ENCODE measurements at regions of chr3 and their contacts with region 1.

Region 1: GRCh38 chr3:184314700-184315542 is 515 bp downstream of the EIF4G1 start:
- DNase-seq: peak; percentile 65
- H3K4me3 Mint-ChIP-seq: peak overlapping the region; percentile 90
- H3K27ac Mint-ChIP-seq: peak overlapping the region; percentile 90
- H3K4me1 Mint-ChIP-seq: peaks cover 42% of the 10 kb centered on the region
- H3K27me3 Mint-ChIP-seq: no peaks in the 10 kb centered on the region

Region 2: DNA sequence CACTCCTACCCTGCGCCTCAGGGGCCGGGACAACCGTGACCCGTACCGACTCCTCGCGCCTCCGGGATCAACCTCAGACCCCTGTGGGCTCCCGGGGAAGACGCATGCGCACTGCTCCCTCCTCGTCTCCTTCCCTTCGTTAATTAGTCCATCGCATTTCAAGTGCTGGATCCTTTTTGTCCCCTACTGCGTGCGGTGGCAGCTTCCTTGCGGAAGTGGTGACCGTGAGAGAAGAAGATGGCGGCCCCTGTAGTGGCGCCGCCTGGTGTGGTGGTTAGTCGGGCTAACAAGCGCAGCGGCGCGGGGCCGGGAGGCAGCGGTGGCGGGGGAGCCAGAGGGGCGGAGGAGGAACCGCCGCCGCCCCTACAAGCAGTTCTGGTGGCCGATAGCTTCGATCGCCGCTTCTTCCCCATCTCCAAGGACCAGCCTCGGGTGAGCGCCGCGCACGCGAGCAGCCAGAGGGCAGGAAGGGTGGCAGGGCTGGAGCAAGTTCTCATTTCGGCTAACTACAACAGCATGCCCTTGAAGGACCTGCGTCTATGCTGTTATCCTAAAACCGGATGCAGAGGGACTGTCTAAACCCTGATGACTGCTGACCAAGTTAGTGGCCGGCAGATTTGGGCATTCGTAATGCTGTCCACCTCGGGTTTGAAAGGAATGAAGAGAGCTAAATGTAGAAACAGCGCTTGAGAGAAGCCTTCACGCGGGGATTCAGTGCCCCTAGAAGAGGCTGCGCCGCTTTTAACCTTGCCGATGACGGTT is 179.6 kb before region 1 on chr3 and contains the start of gene EIF2B5:
- CTCF ChIA-PET with region 1: no interaction called
- POLR2A ChIA-PET with region 1: no interaction called
- DNase-seq: peak; percentile 91
- H3K4me3 Mint-ChIP-seq: peak within 1 kb of the TSS; percentile 98
- H3K27ac Mint-ChIP-seq: peak within 1 kb of the TSS; percentile 90
- H3K4me1 Mint-ChIP-seq: peaks cover 31% of the 10 kb centered on the region
- H3K27me3 Mint-ChIP-seq: no peaks in the 10 kb centered on the region
- total RNA-seq, gene EIF2B5: 45.9 to 47.8 TPM

Region 3: GRCh38 chr3:184298759-184299496 is 16.0 kb before region 1 on chr3 and contains the start of gene PSMD2:
- CTCF ChIA-PET with region 1: no interaction called
- POLR2A ChIA-PET with region 1: interaction called, 10 read pairs
- DNase-seq: peak; percentile 99
- H3K4me3 Mint-ChIP-seq: peak within 1 kb of the TSS; percentile 95
- H3K27ac Mint-ChIP-seq: peak within 1 kb of the TSS; percentile 84
- H3K4me1 Mint-ChIP-seq: peaks cover 30% of the 10 kb centered on the region
- H3K27me3 Mint-ChIP-seq: no peaks in the 10 kb centered on the region
- total RNA-seq, gene PSMD2: 177 TPM

Region 4: GRCh38 chr3:184325715-184326369 is 10.9 kb after region 1 on chr3:
- CTCF ChIA-PET with region 1: no interaction called
- POLR2A ChIA-PET with region 1: interaction called, 18 read pairs
- DNase-seq: no peak
- H3K4me3 Mint-ChIP-seq: no peak overlapping the region
- H3K27ac Mint-ChIP-seq: peak overlapping the region; percentile 42
- H3K4me1 Mint-ChIP-seq: peaks cover 12% of the 10 kb centered on the region
- H3K27me3 Mint-ChIP-seq: no peaks in the 10 kb centered on the region